ENCODE measurements at regions of chr12 and their contacts with region 1.

Region 1: DNA sequence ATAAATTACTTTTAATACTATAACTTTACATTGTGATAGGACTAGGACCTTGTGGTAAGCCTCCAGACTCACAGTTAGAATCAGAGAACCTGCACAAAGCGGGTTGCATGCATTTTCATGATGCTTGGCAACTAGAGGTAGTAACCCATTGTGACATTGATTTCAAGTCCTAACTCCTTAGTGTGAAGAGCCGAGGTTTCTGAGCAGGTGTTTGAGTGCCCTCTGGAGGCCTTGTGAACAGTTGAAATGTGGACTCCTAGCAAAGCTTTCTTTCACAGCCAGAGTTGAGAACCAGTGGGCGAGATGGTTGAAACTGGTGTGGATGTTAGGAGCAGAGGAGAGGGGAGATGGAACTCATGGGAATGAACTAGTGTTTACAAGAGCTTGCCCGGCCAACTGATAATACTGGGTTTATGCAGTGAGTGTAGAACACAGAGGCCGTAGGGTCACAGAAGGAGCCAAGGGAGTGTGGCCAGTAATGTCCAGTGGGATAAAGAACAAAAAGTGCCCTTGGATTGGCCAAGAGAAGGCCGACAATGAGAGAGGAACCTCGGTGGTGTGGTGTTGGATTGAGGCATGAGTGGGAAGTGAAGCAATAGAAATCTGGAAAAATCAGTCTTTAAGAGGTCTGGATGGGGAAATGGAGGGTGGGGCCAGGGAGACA is 10.9 kb downstream of the ZNF664 start:
- DNase-seq: peak; percentile 47
- H3K4me3 ChIP-seq: no peak overlapping the region
- H3K27ac ChIP-seq: no peak overlapping the region
- H3K4me1 ChIP-seq: no peaks in the 10 kb centered on the region
- H3K27me3 ChIP-seq: no peaks in the 10 kb centered on the region
- CTCF ChIP-seq: peak; percentile 38

Region 2: GRCh38 chr12:123905319-123905925 is 78.5 kb before region 1 on chr12:
- intact Hi-C with region 1: loop called (anchors 2 kb)
- DNase-seq: peak; percentile 69
- H3K4me3 ChIP-seq: no peak overlapping the region
- H3K27ac ChIP-seq: no peak overlapping the region
- H3K4me1 ChIP-seq: no peaks in the 10 kb centered on the region
- H3K27me3 ChIP-seq: no peaks in the 10 kb centered on the region
- CTCF ChIP-seq: peak; percentile 64

Region 3: GRCh38 chr12:124032265-124032886 is 48.4 kb after region 1 on chr12:
- intact Hi-C with region 1: no loop called
- DNase-seq: peak; percentile 52
- H3K4me3 ChIP-seq: no peak overlapping the region
- H3K27ac ChIP-seq: no peak overlapping the region
- H3K4me1 ChIP-seq: no peaks in the 10 kb centered on the region
- H3K27me3 ChIP-seq: no peaks in the 10 kb centered on the region
- CTCF ChIP-seq: peak; percentile 73